ENCODE measurements at regions of chr4 and their contacts with region 1.

Region 1: DNA sequence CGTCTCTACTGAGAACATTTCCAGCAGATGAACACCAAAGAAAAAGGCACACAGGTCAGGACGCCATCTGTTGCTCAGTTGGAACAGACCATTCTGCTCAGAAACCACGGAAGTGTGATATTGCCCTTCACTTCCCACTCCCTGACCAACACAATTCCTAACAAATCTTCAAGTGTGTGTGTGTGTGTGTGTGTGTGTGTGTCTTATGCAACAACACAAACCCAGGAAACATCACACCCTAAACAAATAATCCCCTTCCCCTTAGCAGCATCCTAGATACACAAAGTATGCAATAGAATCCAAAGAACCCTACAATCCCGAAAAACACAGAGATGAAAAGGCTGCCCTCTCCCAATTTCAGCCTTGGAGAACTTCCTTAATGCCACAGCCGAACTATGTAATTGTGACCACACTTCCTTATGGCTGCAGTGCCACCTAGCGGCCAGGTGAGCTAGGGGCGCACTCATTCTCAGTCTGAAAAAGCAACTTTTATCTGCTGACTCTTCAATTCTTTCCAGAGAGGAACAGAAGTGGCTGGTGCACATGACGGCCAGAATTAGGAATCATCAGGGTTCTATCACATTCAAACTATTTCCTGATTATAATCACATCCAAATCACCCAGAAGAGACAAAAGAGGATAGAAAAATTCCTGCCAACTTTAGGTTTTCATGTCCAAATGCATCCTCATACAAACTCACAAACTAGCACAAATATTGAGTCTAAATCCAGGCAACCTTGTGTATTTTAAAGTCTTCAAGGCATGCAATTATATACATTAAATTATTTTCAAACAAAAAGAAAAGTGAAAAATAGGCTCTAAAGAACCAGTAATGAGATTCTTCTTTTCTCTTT is 164.9 kb downstream of the DHX15 start:
- DNase-seq: peak; percentile 79
- H3K4me3 ChIP-seq: no peak overlapping the region
- H3K27ac ChIP-seq: no peak overlapping the region
- H3K4me1 ChIP-seq: peaks cover 0 to 6% (median 0%) of the 10 kb centered on the region in 4 donors
- H3K27me3 ChIP-seq: no peaks in the 10 kb centered on the region
- CTCF ChIP-seq: peak; percentile 88 to 93 (median 91)
- EP300 ChIP-seq: no peak
- POLR2A ChIP-seq: no peak

Region 2: DNA sequence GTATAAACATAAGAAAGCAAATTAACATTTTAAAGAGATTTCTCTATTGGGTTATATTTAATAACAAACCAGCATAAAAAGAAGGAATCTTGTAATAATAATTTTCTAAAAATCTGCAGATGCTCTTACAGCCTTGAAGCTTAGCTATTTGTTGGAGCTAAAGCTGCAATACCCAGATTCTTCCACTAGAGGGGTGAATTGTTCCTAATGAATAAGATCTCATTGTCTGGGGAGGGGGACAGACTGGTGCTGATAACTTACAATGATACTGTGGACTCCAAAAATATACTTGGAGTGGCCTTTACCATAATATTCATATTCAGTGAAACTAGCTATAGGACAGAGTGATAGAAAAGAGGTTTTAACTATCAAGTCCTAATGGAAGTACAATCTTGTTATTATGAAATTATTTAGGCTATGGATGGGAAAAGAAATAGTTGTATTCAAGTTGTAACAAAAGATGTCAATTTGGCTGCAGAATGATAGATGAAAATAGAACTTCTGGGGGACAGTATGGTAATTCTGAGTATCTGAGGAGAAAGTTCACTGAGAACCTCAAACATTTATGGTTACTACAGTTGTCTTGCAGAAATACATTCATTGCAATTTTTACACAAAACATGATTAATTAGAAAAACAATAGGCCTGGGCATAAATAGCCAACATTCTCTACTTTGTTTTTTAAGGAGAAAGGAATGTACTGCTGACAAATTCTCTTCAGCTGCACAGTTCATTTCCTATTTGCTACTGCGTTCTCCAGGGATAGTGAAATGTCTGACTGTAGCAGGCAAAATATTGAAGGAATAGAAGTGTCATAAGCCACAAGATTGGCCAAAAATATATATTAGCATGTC is 1283.4 kb before region 1 on chr4:
- in situ Hi-C with region 1: loop called in 2 of 4 experiments (anchors 25 kb)
- intact Hi-C with region 1: loop called (anchors 10 kb)
- DNase-seq: no peak
- H3K4me3 ChIP-seq: no peak overlapping the region
- H3K27ac ChIP-seq: no peak overlapping the region
- H3K4me1 ChIP-seq: no peaks in the 10 kb centered on the region
- H3K27me3 ChIP-seq: no peaks in the 10 kb centered on the region
- CTCF ChIP-seq: peak; percentile 58 to 81 (median 72)
- EP300 ChIP-seq: no peak
- POLR2A ChIP-seq: no peak

Region 3: GRCh38 chr4:23368081-23368697 is 1051.2 kb before region 1 on chr4:
- in situ Hi-C with region 1: loop called in 1 of 4 experiments (anchors 25 kb)
- intact Hi-C with region 1: no loop called
- DNase-seq: peak; percentile 44
- H3K4me3 ChIP-seq: no peak overlapping the region
- H3K27ac ChIP-seq: no peak overlapping the region
- H3K4me1 ChIP-seq: no peaks in the 10 kb centered on the region
- H3K27me3 ChIP-seq: no peaks in the 10 kb centered on the region
- CTCF ChIP-seq: peak; percentile 11 to 56 (median 26)
- EP300 ChIP-seq: no peak
- POLR2A ChIP-seq: no peak

Region 4: DNA sequence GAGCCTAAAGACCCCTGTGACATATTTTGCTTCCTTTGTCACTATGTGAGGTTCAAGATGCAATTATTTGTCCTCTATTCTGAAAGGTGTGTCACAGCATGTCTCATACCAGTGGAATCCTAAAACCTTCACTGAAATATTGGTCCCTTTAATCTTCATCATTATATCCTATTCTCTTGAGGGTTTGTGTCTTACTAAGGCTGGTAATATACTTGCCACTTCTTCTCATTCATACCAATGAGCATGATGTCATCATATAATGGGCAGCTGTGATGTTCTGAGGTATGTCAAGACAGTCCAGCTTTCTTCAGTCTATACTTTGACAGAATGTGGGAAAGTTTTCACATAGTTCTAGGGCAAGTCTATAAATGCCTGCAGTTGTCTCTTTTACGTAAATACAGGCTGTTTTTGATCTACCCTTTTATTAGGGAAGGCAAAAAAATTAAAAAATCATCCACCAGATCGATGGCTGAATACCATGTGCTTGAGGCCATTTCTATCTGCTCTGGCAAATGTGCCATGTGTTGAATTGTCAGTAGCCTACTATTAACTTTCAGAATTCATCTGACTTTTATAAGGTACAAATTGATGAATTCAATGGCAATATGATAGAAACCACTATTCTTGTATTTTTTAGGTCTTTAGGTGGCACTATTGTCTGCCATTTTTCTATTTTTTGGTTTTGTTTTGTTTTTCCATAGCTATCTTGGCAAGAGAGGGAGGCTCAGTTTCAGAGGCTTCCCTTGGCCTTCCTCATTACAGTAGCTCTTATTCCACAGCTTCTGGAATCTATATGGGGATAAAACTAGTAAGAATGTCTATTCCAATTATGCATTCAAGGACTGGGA is 738.5 kb before region 1 on chr4:
- in situ Hi-C with region 1: loop called in 1 of 4 experiments (anchors 25 kb)
- intact Hi-C with region 1: no loop called
- DNase-seq: no peak
- H3K4me3 ChIP-seq: no peak overlapping the region
- H3K27ac ChIP-seq: no peak overlapping the region
- H3K4me1 ChIP-seq: no peaks in the 10 kb centered on the region
- H3K27me3 ChIP-seq: no peaks in the 10 kb centered on the region
- CTCF ChIP-seq: no peak
- EP300 ChIP-seq: no peak
- POLR2A ChIP-seq: no peak

Region 5: DNA sequence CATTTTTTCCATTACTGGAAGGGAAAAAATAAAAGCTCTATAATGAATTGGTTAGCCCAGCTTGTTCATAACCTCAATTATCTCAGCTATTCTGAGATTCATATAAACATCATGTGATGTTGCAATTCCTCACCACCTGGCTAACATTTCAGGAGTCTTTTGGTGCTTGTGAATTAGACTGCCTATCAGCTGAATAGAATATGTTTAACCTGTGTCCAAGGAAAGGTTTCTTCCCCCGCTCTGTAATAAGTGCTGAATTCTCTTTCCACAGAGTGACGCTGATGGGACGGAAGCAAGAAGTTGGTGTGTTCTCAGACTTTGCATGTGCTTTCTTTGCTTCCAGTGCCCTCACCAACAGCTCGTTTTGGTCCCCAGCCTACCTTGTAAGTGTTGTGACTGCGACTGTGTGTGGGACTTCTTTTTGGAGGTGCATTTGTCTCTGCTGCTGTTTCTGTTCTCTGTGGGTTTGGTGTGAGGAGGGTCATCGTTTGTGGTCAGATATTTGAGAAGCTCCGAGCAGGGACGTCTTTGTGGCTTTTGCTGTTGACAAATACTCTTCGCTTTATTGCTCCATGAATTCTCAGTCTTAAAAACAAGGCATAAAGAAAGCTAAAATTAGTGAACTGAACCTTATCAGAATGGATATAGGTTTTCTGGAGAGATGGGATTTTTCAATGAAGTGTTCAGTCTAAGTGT is 591.2 kb before region 1 on chr4:
- in situ Hi-C with region 1: loop called in 1 of 4 experiments (anchors 25 kb)
- intact Hi-C with region 1: no loop called
- DNase-seq: no peak
- H3K4me3 ChIP-seq: no peak overlapping the region
- H3K27ac ChIP-seq: no peak overlapping the region
- H3K4me1 ChIP-seq: no peaks in the 10 kb centered on the region
- H3K27me3 ChIP-seq: no peaks in the 10 kb centered on the region
- CTCF ChIP-seq: no peak
- EP300 ChIP-seq: no peak
- POLR2A ChIP-seq: no peak

Region 6: GRCh38 chr4:24809376-24809775 is 390.0 kb after region 1 on chr4:
- in situ Hi-C with region 1: no loop called
- intact Hi-C with region 1: no loop called
- DNase-seq: no peak
- H3K4me3 ChIP-seq: no peak overlapping the region
- H3K27ac ChIP-seq: peak overlapping the region in 3 of 4 donors; percentile 11 to 56 (median 49)
- H3K4me1 ChIP-seq: peaks cover 0 to 3% (median 1%) of the 10 kb centered on the region in 4 donors
- H3K27me3 ChIP-seq: no peaks in the 10 kb centered on the region
- CTCF ChIP-seq: no peak
- EP300 ChIP-seq: no peak
- POLR2A ChIP-seq: no peak

Measured in transverse colon (tissue), 4 donors.